Activated CD4-positive, alpha-beta T cell treated with anti-CD3 and anti-CD28 coated beads for 36 hours (primary cell): ENCODE measurements at regions of chr4 and their contacts with region 1.

Region 1: GRCh38 chr4:139651282-139652194 is 14.1 kb upstream of the MGST2 start:
- DNase-seq: peak; percentile 84
- ATAC-seq: peak; percentile 85
- H3K4me3 Mint-ChIP-seq: no peak overlapping the region
- H3K27ac Mint-ChIP-seq: peak overlapping the region; percentile 5
- H3K4me1 Mint-ChIP-seq: peaks cover 5% of the 10 kb centered on the region
- H3K27me3 Mint-ChIP-seq: no peaks in the 10 kb centered on the region

Region 2: GRCh38 chr4:139099366-139099982 is 552.1 kb before region 1 on chr4:
- CTCF ChIA-PET with region 1: no interaction called
- POLR2A ChIA-PET with region 1: no interaction called
- intact Hi-C with region 1: loop called in 1 of 2 experiments (anchors 1 kb)
- DNase-seq: peak; percentile 84
- ATAC-seq: peak; percentile 66
- H3K4me3 Mint-ChIP-seq: no peak overlapping the region
- H3K27ac Mint-ChIP-seq: no peak overlapping the region
- H3K4me1 Mint-ChIP-seq: peaks cover 2% of the 10 kb centered on the region
- H3K27me3 Mint-ChIP-seq: no peaks in the 10 kb centered on the region

Region 3: GRCh38 chr4:139416073-139416673 is 235.4 kb before region 1 on chr4:
- CTCF ChIA-PET with region 1: interaction called, 3 read pairs
- POLR2A ChIA-PET with region 1: no interaction called
- intact Hi-C with region 1: loop called in 1 of 2 experiments (anchors 1 kb)
- DNase-seq: peak; percentile 18
- ATAC-seq: no peak
- H3K4me3 Mint-ChIP-seq: no peak overlapping the region
- H3K27ac Mint-ChIP-seq: no peak overlapping the region
- H3K4me1 Mint-ChIP-seq: peaks cover 12% of the 10 kb centered on the region
- H3K27me3 Mint-ChIP-seq: no peaks in the 10 kb centered on the region

Region 4: GRCh38 chr4:139499026-139499585 is 152.4 kb before region 1 on chr4:
- CTCF ChIA-PET with region 1: interaction called, 4 read pairs
- POLR2A ChIA-PET with region 1: no interaction called
- intact Hi-C with region 1: loop called in 1 of 2 experiments (anchors 2 kb)
- DNase-seq: no peak
- ATAC-seq: no peak
- H3K4me3 Mint-ChIP-seq: no peak overlapping the region
- H3K27ac Mint-ChIP-seq: no peak overlapping the region
- H3K4me1 Mint-ChIP-seq: no peaks in the 10 kb centered on the region
- H3K27me3 Mint-ChIP-seq: no peaks in the 10 kb centered on the region

Region 5: DNA sequence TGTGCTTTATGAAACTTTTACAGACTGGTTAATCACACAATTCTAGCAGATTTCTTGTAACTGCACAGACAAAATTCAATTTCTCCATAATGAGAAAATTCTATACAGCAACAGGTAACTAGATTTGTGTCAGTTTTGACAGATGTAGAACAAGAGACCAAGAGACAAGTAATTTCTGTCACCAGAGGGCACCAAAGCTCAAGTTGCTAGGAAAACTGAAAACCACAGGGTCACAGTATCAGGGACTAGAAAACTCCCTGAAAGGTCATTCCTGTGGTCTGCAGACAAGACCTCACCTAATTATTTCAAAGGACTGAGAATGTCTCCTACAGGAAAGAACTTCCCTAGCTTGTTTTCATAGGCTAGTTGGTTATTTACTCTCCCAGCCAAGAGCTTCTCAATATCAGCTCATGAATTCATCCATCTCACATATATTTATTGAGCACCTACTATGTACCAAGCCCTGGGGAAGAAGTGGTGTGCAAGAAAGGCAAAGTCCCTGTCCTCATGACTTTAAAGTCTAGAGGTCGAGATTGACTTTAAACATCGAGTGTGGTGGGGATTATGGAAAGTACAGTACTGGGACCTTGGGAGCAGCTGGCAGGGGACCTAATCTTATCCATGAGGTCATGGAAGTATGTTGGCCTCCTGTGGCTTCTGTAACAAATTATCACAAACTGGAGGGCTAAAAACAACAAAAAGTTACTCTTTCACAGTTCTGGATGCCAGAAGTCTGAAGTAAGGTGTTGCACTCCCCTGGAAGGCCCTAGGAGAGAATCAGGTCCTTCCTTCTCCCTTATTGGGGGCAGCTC is 47.8 kb before region 1 on chr4:
- CTCF ChIA-PET with region 1: interaction called, 82 read pairs
- POLR2A ChIA-PET with region 1: no interaction called
- intact Hi-C with region 1: loop called (anchors 1 kb)
- DNase-seq: peak; percentile 45
- ATAC-seq: peak; percentile 62
- H3K4me3 Mint-ChIP-seq: no peak overlapping the region
- H3K27ac Mint-ChIP-seq: no peak overlapping the region
- H3K4me1 Mint-ChIP-seq: peaks cover 10% of the 10 kb centered on the region
- H3K27me3 Mint-ChIP-seq: peaks cover 5% of the 10 kb centered on the region

Region 6: DNA sequence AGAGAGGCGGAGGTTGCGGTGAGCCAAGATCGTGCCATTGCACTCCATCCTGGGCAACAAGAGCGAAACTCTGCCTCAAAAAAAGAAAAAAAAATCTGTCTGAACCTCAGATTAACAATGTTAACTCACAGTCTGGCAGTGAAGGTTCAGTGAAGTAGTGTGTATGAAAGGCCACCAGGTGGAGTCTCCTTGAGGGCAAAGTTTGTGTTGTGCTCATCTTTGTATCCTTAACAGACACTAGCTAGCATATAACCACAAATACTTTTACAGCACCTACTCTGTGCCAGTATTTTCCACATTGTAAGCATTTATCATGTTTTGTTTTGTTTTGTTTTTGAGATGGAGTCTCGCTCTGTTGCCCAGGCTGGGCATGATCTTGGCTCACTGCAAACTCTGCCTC is 31.9 kb before region 1 on chr4:
- CTCF ChIA-PET with region 1: interaction called, 10 read pairs
- POLR2A ChIA-PET with region 1: no interaction called
- intact Hi-C with region 1: no loop called
- DNase-seq: peak; percentile 21
- ATAC-seq: peak; percentile 78
- H3K4me3 Mint-ChIP-seq: no peak overlapping the region
- H3K27ac Mint-ChIP-seq: no peak overlapping the region
- H3K4me1 Mint-ChIP-seq: no peaks in the 10 kb centered on the region
- H3K27me3 Mint-ChIP-seq: peaks cover 12% of the 10 kb centered on the region